ENCODE measurements at regions of chr20 and their contacts with region 1.

Region 1: DNA sequence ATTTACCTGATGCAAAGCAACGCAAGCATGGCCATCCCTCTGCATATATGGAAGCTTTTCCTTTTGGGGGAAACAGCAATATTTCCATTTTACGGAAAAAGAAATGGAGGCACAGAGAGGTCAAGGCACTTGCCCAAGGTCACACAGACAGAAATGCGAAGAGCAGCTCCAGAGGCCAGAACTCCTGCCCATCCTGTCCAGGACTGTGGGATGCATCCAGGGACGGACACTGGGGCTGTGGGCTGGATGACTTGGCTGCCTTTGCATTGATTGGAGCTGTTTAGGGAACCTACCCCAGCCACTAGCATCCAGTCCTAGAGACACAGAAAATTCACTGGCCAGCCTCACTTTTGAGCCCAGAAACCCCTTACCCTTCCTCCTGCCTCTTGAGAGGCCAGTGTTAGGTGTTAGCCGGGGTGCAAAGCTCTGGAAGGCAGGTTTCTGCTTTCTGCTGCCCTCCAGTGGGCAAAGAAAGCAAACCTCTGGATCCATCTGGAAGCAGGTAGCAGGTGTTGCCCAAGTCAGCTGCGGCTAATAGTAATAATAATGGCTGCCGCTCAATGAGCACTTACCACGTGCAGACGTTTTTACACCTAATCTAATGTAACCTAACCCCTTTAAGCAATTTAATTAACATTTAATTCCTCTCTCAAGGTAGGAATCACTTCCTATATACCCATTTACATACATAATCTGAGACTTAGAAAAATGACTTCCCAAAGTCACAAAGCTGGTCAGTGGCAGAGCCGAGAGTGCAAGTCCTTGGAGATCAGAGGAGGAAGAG is 31.7 kb upstream of the CCN5 start:
- DNase-seq: peak; percentile 68 to 87 (median 80)
- ATAC-seq: peak; percentile 93
- H3K4me3 ChIP-seq: no peak overlapping the region
- H3K27ac ChIP-seq: no peak overlapping the region
- H3K4me1 ChIP-seq: peaks cover 5% of the 10 kb centered on the region in 2 experiments; a peak in 3 of 5 replicates
- H3K27me3 ChIP-seq: peaks cover 13 to 14% of the 10 kb centered on the region in 2 experiments; a peak in 4 of 5 replicates
- CTCF ChIP-seq: peak; percentile 75 to 77 (median 76)
- EP300 ChIP-seq: no peak
- POLR2A ChIP-seq: no peak
- RAD21 ChIP-seq: peak; percentile 46 to 78

Region 2: GRCh38 chr20:44702776-44703175 is 19.3 kb after region 1 on chr20:
- CTCF ChIA-PET with region 1: no interaction called
- POLR2A ChIA-PET with region 1: no interaction called
- in situ Hi-C with region 1: no loop called
- intact Hi-C with region 1: no loop called
- DNase-seq: no peak
- ATAC-seq: peak; percentile 51; the same call in 2 of the 3 replicates
- H3K4me3 ChIP-seq: no peak overlapping the region
- H3K27ac ChIP-seq: no peak overlapping the region
- H3K4me1 ChIP-seq: no peaks in the 10 kb centered on the region
- H3K27me3 ChIP-seq: peaks cover 33 to 55% of the 10 kb centered on the region in 2 experiments; a peak in 4 of 5 replicates
- CTCF ChIP-seq: no peak
- EP300 ChIP-seq: no peak
- POLR2A ChIP-seq: no peak
- RAD21 ChIP-seq: no peak

Region 3: DNA sequence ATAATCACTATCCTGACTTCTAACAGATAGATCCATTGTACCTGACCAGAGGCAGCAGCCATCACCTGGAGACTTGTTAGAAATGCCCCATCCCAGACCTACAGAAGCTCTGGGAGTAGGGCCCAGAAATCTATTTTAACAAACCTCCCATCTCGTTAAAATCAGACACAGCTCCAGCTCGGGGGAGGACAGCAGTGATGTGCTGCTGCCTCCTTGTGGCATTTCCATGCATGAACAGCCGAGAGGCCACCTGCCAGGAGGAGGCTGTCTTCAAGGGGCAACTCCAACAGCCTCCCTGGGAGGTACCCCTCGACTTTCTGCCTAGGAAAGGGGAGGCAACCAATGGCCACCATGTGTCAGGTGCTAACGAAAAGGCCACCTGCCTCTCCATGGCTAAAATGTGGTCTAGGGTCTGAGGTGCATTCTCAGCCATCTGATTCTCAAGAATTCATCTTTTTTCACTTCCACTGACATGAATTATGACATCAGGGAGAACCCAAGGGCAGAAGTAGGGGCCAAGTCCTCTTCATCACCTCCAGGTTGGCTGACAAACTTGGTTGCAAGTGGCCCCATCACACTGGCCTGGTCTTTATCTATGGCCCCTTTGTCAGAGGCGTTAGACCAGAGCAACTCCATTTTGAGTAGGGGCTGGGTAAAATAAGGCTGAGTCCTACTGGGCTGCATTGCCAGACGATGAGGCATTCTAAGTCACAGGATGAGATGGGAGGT is 50.0 kb after region 1 on chr20:
- CTCF ChIA-PET with region 1: interaction called, 58 read pairs
- POLR2A ChIA-PET with region 1: no interaction called
- in situ Hi-C with region 1: no loop called
- intact Hi-C with region 1: loop called (anchors 1 kb)
- DNase-seq: peak; percentile 52 to 70 (median 60)
- ATAC-seq: peak; percentile 81
- H3K4me3 ChIP-seq: no peak overlapping the region
- H3K27ac ChIP-seq: no peak overlapping the region
- H3K4me1 ChIP-seq: no peaks in the 10 kb centered on the region; a peak in 1 of 5 replicates
- H3K27me3 ChIP-seq: peaks cover 12 to 27% of the 10 kb centered on the region in 2 experiments; a peak in 4 of 5 replicates
- CTCF ChIP-seq: peak; percentile 86 to 87 (median 87)
- EP300 ChIP-seq: no peak
- POLR2A ChIP-seq: no peak
- RAD21 ChIP-seq: peak; percentile 86 to 88

Region 4: GRCh38 chr20:44739942-44740341 is 56.5 kb after region 1 on chr20:
- CTCF ChIA-PET with region 1: interaction called, 58 read pairs
- POLR2A ChIA-PET with region 1: no interaction called
- in situ Hi-C with region 1: loop called (anchors 5 kb)
- intact Hi-C with region 1: no loop called
- DNase-seq: no peak
- ATAC-seq: no peak
- H3K4me3 ChIP-seq: no peak overlapping the region
- H3K27ac ChIP-seq: no peak overlapping the region
- H3K4me1 ChIP-seq: no peaks in the 10 kb centered on the region; a peak in 1 of 5 replicates
- H3K27me3 ChIP-seq: no peaks in the 10 kb centered on the region
- CTCF ChIP-seq: no peak
- EP300 ChIP-seq: no peak
- POLR2A ChIP-seq: no peak
- RAD21 ChIP-seq: no peak

Measured in K562 (cell line).